H1 (cell line): ENCODE measurements at regions of chr18 and their contacts with region 1.

Region 1: DNA sequence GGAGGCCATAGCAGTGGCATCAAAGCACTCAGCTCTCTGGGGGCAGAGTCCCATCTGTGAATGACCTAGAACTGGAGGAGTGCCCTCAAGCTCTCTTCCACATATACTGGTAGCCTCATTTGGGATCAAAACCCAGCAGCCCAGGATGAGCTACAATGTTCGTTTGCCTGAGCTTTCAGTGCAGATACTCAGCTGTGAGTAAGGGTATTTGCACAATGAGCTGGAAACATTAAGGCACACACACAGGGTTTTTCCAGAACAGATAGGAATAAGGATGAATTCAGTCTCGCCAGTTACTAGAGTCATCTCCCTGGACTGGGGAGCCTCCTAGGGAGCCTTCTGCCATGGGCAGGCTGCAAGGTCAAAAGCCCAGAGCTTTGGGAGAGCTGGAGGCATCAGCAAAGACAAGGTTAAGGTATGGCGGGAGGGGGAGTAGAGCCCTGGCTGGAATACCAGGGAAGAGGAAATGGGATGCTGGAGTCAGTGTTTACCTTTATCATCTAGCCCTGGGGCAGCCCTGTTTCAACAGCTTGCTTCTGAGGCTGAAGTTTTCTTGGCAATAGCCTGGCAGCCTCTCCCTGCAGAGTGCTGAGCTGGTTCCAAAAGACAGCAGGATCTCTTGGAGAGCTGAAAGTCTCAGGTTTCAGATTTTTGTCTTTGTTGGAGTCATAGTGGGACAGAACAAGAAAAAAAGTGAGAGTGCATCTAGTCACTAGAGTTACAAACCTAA is 187.7 kb downstream of the LOXHD1 start:
- DNase-seq: no peak
- H3K4me3 ChIP-seq: no peak overlapping the region
- H3K27ac ChIP-seq: no peak overlapping the region
- H3K4me1 ChIP-seq: peaks cover 5 to 11% (median 6%) of the 10 kb centered on the region in 4 experiments; a peak in 4 of 7 replicates
- H3K27me3 ChIP-seq: peaks cover 0 to 1% (median 0%) of the 10 kb centered on the region in 4 experiments; a peak in 1 of 7 replicates
- CTCF ChIP-seq: no peak
- EP300 ChIP-seq: no peak
- POLR2A ChIP-seq: no peak
- RAD21 ChIP-seq: no peak

Region 2: DNA sequence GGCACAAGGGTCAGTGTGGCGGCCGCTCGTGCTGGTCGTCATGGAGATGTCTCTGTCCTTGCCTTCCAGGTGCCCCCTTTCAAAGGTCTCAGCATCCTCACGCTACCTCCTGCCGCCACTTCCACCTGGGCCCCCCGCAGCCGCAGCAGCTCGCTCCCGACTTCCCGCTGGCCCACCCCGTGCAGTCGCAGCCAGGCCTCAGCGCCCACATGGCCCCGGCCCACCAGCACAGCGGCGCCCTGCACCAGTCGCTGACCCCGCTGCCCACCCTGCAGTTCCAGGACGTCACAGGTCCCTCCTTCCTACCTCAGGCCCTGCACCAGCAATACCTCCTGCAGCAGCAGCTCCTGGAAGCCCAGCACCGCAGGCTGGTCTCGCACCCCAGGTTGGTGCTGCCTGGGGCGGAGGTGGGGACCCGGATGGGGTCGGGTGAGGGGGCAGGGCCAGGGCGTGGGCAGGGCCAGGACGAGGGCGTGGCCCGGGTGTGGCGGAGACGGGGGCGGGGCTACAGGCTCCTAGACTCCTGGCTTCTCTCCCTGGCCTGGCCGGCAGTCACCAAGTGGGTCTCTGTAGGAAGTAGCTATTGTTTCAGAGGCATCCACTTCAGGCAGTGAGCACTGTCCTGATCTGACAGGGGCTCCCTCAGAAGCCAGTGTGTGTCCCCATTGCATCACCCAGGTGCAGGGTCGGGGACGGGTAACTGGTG is 36.1 kb before region 1 on chr18:
- CTCF ChIA-PET with region 1: interaction called, 11 read pairs
- POLR2A ChIA-PET with region 1: interaction called, 3 read pairs
- DNase-seq: peak; percentile 46 to 94
- H3K4me3 ChIP-seq: peak overlapping the region in 3 of 4 experiments; percentile 17 to 49 (median 49); a peak in 5 of 8 replicates
- H3K27ac ChIP-seq: no peak overlapping the region
- H3K4me1 ChIP-seq: peaks cover 0 to 17% (median 9%) of the 10 kb centered on the region in 4 experiments; a peak in 6 of 7 replicates
- H3K27me3 ChIP-seq: no peaks in the 10 kb centered on the region
- CTCF ChIP-seq: no peak
- EP300 ChIP-seq: no peak
- POLR2A ChIP-seq: no peak
- RAD21 ChIP-seq: peak in 1 of 2 experiments; percentile 0; a peak in 1 of 4 replicates

Region 3: GRCh38 chr18:46445914-46446313 is 23.4 kb before region 1 on chr18:
- CTCF ChIA-PET with region 1: interaction called, 12 read pairs
- POLR2A ChIA-PET with region 1: interaction called, 5 read pairs
- DNase-seq: no peak
- H3K4me3 ChIP-seq: no peak overlapping the region
- H3K27ac ChIP-seq: no peak overlapping the region
- H3K4me1 ChIP-seq: peaks cover 5 to 11% (median 7%) of the 10 kb centered on the region in 4 experiments
- H3K27me3 ChIP-seq: no peaks in the 10 kb centered on the region
- CTCF ChIP-seq: no peak
- EP300 ChIP-seq: no peak
- POLR2A ChIP-seq: no peak
- RAD21 ChIP-seq: peak in 1 of 2 experiments; percentile 28; a peak in 1 of 4 replicates

Region 4: GRCh38 chr18:46497129-46497528 is 27.8 kb after region 1 on chr18:
- CTCF ChIA-PET with region 1: no interaction called
- POLR2A ChIA-PET with region 1: no interaction called
- DNase-seq: peak in 1 of 2 experiments; percentile 85
- H3K4me3 ChIP-seq: no peak overlapping the region
- H3K27ac ChIP-seq: no peak overlapping the region
- H3K4me1 ChIP-seq: peaks cover 0 to 2% (median 0%) of the 10 kb centered on the region in 4 experiments; a peak in 1 of 7 replicates
- H3K27me3 ChIP-seq: no peaks in the 10 kb centered on the region
- CTCF ChIP-seq: no peak
- EP300 ChIP-seq: no peak
- POLR2A ChIP-seq: no peak
- RAD21 ChIP-seq: peak in 1 of 2 experiments; percentile 13; a peak in 1 of 4 replicates